H1 (cell line): ENCODE measurements at regions of chr10 and their contacts with region 1.

Region 1: DNA sequence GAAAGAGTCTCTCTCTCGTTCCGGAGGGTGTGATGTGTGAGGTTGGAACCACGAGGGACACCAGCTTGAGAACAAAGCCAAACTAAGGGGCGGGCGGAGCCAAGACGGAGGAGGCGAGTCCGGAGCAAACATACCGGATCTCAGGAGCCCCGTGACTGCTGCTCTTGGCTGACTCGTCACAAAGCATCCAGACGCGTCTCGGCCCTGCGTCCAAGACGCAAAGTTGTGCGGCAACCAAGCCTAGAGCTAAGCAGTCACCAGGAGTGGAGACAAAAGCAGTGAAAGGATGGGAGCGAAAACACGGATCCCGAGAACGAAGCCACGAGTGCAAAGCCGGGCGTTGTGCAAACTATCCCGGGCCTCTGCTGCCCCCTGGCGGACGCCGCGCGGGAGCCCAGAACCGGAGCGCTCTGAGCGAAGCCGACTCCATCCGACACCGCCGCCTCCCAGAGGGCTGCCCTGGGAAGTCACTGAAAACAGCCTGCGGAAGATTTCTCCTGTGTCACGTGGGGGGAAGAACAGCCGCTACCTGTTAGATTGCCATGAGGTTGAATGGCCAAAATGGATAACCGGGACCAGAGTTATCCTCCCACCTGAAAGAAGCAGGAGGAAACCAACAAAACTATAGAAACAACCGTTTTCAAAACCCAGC is 46.4 kb upstream of the TMEM72 start:
- DNase-seq: peak; percentile 51 to 99
- H3K4me3 ChIP-seq: peak overlapping the region; percentile 36 to 61 (median 59); a peak in 7 of 8 replicates
- H3K27ac ChIP-seq: no peak overlapping the region
- H3K4me1 ChIP-seq: peaks cover 2 to 17% (median 8%) of the 10 kb centered on the region in 4 experiments; a peak in 6 of 7 replicates
- H3K27me3 ChIP-seq: peaks cover 6 to 38% (median 31%) of the 10 kb centered on the region in 4 experiments
- CTCF ChIP-seq: peak; percentile 77 to 97 (median 86)
- EP300 ChIP-seq: no peak
- POLR2A ChIP-seq: peak; percentile 47 to 59; a peak in 2 of 3 replicates
- RAD21 ChIP-seq: peak; percentile 78 to 84

Region 2: DNA sequence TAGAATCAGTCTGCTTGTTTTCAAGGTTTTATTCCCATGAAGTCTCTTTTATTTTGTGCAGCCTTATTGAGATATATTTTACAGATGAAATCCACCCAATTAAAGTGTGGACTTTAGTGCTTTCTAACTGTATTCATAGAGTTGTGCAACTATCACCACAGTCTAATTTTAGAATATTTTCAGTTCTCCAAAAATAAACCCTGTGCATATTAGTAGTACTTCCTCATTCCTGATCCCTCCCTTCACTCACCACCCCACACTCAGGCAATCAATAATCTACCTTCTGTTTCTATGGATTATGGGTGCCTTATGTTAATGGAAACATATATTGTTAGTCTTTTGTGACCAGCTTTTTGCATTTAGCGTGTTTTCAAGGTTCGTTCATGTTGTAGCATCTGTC is 139.4 kb before region 1 on chr10:
- CTCF ChIA-PET with region 1: no interaction called
- POLR2A ChIA-PET with region 1: no interaction called
- DNase-seq: no peak
- H3K4me3 ChIP-seq: no peak overlapping the region
- H3K27ac ChIP-seq: no peak overlapping the region
- H3K4me1 ChIP-seq: no peaks in the 10 kb centered on the region
- H3K27me3 ChIP-seq: no peaks in the 10 kb centered on the region
- CTCF ChIP-seq: no peak
- EP300 ChIP-seq: no peak
- POLR2A ChIP-seq: no peak
- RAD21 ChIP-seq: no peak

Region 3: GRCh38 chr10:44878706-44879530 is 14.2 kb after region 1 on chr10:
- CTCF ChIA-PET with region 1: interaction called, 90 read pairs
- POLR2A ChIA-PET with region 1: interaction called, 6 read pairs
- DNase-seq: peak; percentile 88 to 90
- H3K4me3 ChIP-seq: peak overlapping the region; percentile 39 to 57 (median 47); a peak in 7 of 8 replicates
- H3K27ac ChIP-seq: no peak overlapping the region
- H3K4me1 ChIP-seq: peaks cover 0 to 7% (median 6%) of the 10 kb centered on the region in 4 experiments; a peak in 6 of 7 replicates
- H3K27me3 ChIP-seq: peaks cover 0 to 11% (median 5%) of the 10 kb centered on the region in 4 experiments; a peak in 6 of 7 replicates
- CTCF ChIP-seq: peak; percentile 26 to 58 (median 40); a peak in 3 of 4 replicates
- EP300 ChIP-seq: no peak
- POLR2A ChIP-seq: no peak
- RAD21 ChIP-seq: peak; percentile 42 to 54